ENCODE measurements at regions of chr16 and their contacts with region 1.

Region 1: GRCh38 chr16:50065624-50066481 is at the start of gene HEATR3:
- DNase-seq: peak; percentile 84 to 97
- H3K4me3 ChIP-seq: peak within 1 kb of the TSS; percentile 61 to 90 (median 78)
- H3K27ac ChIP-seq: peak within 1 kb of the TSS; percentile 84; the same call in 1 of the 2 replicates
- H3K4me1 ChIP-seq: peaks cover 0 to 9% (median 3%) of the 10 kb centered on the region in 4 experiments; a peak in 5 of 7 replicates
- H3K27me3 ChIP-seq: no peaks in the 10 kb centered on the region
- CTCF ChIP-seq: no peak
- EP300 ChIP-seq: no peak
- POLR2A ChIP-seq: peak in 1 of 2 experiments; percentile 29; a peak in 1 of 3 replicates
- RAD21 ChIP-seq: 0 out of 4 replicates have a peak, but pooled peaks of 1 of the 2 experiments have one; percentile 1
- total RNA-seq, gene HEATR3: 22.2 and 29.2 TPM in 2 replicates

Region 2: DNA sequence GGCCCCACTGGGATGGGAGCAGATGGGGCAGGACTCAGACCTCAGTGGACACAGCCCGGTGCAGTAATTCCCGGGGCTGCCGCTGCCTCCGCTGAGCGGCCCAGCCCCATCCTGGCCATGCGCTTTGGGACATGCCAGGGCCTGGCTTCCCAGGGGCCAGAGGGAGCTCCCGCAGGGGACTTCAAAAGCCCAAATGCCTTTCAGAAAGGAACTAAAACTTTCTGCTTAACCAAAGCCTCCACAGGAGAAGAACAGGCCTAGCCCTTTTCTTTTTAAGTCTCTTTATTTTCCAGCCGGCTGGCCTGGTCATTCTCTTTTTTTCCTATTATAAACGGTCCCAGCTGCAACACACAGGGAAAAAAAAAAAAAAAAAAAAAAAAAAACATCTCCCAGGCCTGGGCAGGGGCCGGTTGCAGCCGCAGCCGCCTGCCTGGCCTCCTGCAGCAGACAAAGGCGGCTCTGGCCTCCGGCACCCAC is 199.2 kb before region 1 on chr16:
- CTCF ChIA-PET with region 1: no interaction called
- POLR2A ChIA-PET with region 1: no interaction called
- DNase-seq: peak in 1 of 2 experiments; percentile 63
- H3K4me3 ChIP-seq: peak overlapping the region in 1 of 4 experiments; percentile 2; a peak in 1 of 8 replicates
- H3K27ac ChIP-seq: no peak overlapping the region
- H3K4me1 ChIP-seq: peaks cover 7 to 21% (median 16%) of the 10 kb centered on the region in 4 experiments
- H3K27me3 ChIP-seq: peaks cover 0 to 6% (median 2%) of the 10 kb centered on the region in 4 experiments; a peak in 4 of 7 replicates
- CTCF ChIP-seq: no peak
- EP300 ChIP-seq: no peak
- POLR2A ChIP-seq: no peak
- RAD21 ChIP-seq: peak; percentile 5 to 19; a peak in 1 of 4 replicates

Region 3: GRCh38 chr16:50024684-50025536 is 40.9 kb before region 1 on chr16 and contains the start of gene CNEP1R1:
- CTCF ChIA-PET with region 1: interaction called, 26 read pairs
- POLR2A ChIA-PET with region 1: interaction called, 5 read pairs
- DNase-seq: peak; percentile 92 to 94
- H3K4me3 ChIP-seq: peak within 1 kb of the TSS; percentile 59 to 95 (median 90)
- H3K27ac ChIP-seq: no peak within 1 kb of the TSS
- H3K4me1 ChIP-seq: peaks cover 0 to 6% (median 0%) of the 10 kb centered on the region in 4 experiments; a peak in 2 of 7 replicates
- H3K27me3 ChIP-seq: no peaks in the 10 kb centered on the region
- CTCF ChIP-seq: peak; percentile 93 to 99 (median 96)
- EP300 ChIP-seq: peak in 1 of 2 experiments; percentile 50; a peak in 1 of 3 replicates
- POLR2A ChIP-seq: peak in 1 of 2 experiments; percentile 28; a peak in 1 of 3 replicates
- RAD21 ChIP-seq: peak; percentile 85 to 88
- total RNA-seq, gene CNEP1R1: 13.6 and 16.2 TPM in 2 replicates

Region 4: GRCh38 chr16:50081428-50082018 is 15.7 kb after region 1 on chr16:
- CTCF ChIA-PET with region 1: interaction called, 14 read pairs
- POLR2A ChIA-PET with region 1: no interaction called
- DNase-seq: no peak
- H3K4me3 ChIP-seq: no peak overlapping the region
- H3K27ac ChIP-seq: no peak overlapping the region
- H3K4me1 ChIP-seq: no peaks in the 10 kb centered on the region
- H3K27me3 ChIP-seq: no peaks in the 10 kb centered on the region
- CTCF ChIP-seq: no peak
- EP300 ChIP-seq: no peak
- POLR2A ChIP-seq: no peak
- RAD21 ChIP-seq: no peak

Measured in H1 (cell line).